Heart right ventricle (tissue), 16 donors: ENCODE measurements at regions of chr7 and their contacts with region 1.

Region 1: DNA sequence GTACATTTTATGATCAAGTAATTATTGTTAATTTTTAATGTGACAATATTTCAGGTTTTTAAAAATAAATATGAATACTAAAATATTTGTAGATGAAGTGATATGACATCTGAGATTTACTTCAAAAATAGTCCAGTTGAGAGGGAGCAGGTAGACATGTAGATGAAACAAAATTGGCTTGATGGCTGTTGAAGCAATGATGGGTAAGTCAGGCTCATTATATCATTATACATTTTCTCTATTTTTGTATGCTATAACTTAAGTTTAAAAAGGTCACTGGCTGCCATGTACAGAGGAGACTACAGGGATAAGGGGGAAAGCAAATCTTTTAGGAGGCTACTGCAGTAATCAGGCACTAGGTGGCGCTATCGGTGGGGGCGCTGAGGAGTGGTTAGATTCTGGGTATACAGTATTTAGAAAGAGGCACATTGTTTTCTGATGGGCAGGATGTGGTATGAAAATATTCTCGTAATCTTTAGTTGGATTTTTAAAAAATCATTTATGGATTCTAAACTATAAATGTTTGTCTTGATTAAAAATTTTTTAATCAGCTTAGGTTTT is 189.8 kb upstream of the IMMP2L start:
- DNase-seq: peak; percentile 52 to 53
- ATAC-seq: peak in 5 of 8 donors; percentile 29 to 65 (median 62)
- H3K4me3 ChIP-seq: no peak overlapping the region
- H3K27ac ChIP-seq: no peak overlapping the region
- H3K4me1 ChIP-seq: no peaks in the 10 kb centered on the region
- H3K27me3 ChIP-seq: no peaks in the 10 kb centered on the region
- CTCF ChIP-seq: peak; percentile 36 to 85 (median 75)

Region 2: GRCh38 chr7:111690364-111691111 is 61.6 kb before region 1 on chr7:
- intact Hi-C with region 1: no loop called
- DNase-seq: no peak
- ATAC-seq: no peak
- H3K4me3 ChIP-seq: no peak overlapping the region
- H3K27ac ChIP-seq: no peak overlapping the region
- H3K4me1 ChIP-seq: no peaks in the 10 kb centered on the region
- H3K27me3 ChIP-seq: peaks cover 0 to 14% (median 0%) of the 10 kb centered on the region in 7 donors
- CTCF ChIP-seq: no peak

Region 3: DNA sequence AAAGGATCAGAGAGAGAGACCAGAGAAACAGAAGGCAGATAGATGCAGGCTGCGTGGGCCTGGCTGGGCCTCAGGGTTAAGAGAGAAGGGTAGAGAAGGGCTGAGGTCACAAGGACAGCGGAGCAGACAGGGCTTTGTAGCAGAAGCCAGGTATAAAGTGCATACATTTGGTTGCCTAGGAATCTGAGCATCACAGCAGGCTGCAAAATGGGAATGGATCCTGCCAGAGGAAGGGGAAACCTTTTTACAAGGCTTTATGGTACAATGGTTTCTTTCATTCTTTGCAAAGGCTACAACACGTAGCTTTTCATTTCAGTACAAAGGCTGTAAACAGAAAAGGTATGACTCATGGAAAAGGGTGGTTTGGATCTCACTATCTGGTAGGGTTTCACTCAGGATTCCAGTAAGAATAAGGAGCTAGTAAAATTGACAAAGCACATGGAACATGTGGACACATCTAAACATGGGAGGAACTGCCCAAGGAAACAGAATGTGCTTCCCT is 179.0 kb after region 1 on chr7:
- intact Hi-C with region 1: loop called in 1 of 10 experiments (anchors 10 kb)
- DNase-seq: no peak
- ATAC-seq: peak in 7 of 8 donors; percentile 25 to 90 (median 70)
- H3K4me3 ChIP-seq: no peak overlapping the region
- H3K27ac ChIP-seq: peak overlapping the region in 8 of 10 donors; percentile 3 to 79 (median 62)
- H3K4me1 ChIP-seq: peaks cover 0 to 18% (median 7%) of the 10 kb centered on the region in 9 donors
- H3K27me3 ChIP-seq: no peaks in the 10 kb centered on the region
- CTCF ChIP-seq: no peak

Region 4: GRCh38 chr7:112405286-112405685 is 653.2 kb after region 1 on chr7:
- intact Hi-C with region 1: loop called in 5 of 10 experiments (anchors 5 to 10 kb)
- DNase-seq: no peak
- ATAC-seq: no peak
- H3K4me3 ChIP-seq: no peak overlapping the region
- H3K27ac ChIP-seq: no peak overlapping the region
- H3K4me1 ChIP-seq: no peaks in the 10 kb centered on the region
- H3K27me3 ChIP-seq: peaks cover 0 to 4% (median 0%) of the 10 kb centered on the region in 7 donors
- CTCF ChIP-seq: no peak